ENCODE measurements at regions of chr7 and their contacts with region 1.

Region 1: DNA sequence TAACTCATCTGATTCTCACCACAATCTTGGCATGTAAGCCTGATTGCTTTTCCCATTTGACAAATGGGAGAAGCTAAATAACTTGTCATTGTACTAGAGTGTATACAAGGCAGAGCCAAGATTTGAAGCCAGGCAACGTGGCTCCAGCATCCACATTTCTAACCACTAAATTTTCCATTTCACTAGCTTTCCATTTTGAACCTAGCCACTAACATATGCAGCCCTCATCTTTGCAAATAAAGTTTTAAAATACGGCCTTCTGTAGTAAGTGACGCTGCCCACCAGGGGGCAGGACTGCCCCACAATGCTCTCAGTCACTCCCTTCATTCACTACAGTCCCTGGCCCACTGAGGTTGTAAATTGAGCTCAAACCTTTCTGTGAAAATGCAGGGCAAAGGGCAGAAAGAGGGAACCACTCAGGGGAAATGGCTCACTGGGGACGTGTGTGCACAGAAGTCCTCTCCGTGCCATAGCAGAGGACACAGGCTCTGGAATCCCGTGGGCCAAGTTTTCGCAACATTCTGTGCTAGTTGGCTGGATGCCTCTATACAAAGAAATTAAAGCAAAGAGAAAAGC is 315.7 kb downstream of the TNS3 start:
- DNase-seq: peak; percentile 60
- H3K4me3 ChIP-seq: no peak overlapping the region
- H3K27ac ChIP-seq: no peak overlapping the region
- H3K4me1 ChIP-seq: no peaks in the 10 kb centered on the region
- H3K27me3 ChIP-seq: no peaks in the 10 kb centered on the region
- CTCF ChIP-seq: peak; percentile 86

Region 2: GRCh38 chr7:47428092-47428767 is 162.0 kb after region 1 on chr7:
- CTCF ChIA-PET with region 1: no interaction called
- POLR2A ChIA-PET with region 1: no interaction called
- intact Hi-C with region 1: no loop called
- DNase-seq: no peak
- H3K4me3 ChIP-seq: no peak overlapping the region
- H3K27ac ChIP-seq: no peak overlapping the region
- H3K4me1 ChIP-seq: no peaks in the 10 kb centered on the region
- H3K27me3 ChIP-seq: peaks cover 7% of the 10 kb centered on the region
- CTCF ChIP-seq: no peak

Region 3: DNA sequence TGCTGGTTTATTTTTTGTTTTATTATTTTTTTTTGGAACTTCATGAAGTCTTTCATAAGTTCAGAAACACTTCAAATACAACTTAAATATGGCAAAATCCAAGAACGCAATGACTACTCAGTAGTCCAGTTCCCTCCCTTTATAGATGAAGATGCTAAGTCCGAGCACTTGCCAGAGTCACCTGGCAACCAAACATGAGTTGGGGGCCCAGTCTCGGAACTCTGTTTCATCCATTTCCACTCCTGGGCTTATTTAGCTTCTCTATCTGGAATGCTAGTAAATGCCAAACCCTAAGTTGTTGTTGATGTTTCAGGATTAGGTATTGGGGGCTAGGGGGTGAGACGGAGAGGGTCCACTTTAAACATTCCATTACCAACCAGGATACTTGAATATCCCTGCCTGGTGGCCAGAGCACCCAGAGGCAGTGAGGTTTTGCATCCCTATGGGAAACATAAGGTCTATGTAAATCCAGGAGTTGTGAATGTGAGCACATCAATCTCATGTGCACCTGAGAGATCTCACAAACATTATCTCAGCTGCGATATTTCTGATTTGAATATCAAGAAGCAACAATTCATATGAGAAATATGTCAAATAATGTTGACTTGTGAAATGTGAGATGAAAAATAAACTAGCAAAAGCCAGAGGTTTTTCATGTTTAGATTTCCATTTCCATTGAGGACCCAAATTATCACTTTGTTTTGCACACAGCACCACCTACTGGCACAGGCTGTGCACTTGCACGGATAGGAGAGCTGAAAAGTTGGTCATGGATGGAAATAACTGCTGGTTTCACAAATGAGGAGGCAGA is 552.8 kb after region 1 on chr7:
- CTCF ChIA-PET with region 1: interaction called, 13 read pairs
- POLR2A ChIA-PET with region 1: no interaction called
- intact Hi-C with region 1: loop called (anchors 2 kb)
- DNase-seq: peak; percentile 65
- H3K4me3 ChIP-seq: no peak overlapping the region
- H3K27ac ChIP-seq: no peak overlapping the region
- H3K4me1 ChIP-seq: no peaks in the 10 kb centered on the region
- H3K27me3 ChIP-seq: peaks cover 15% of the 10 kb centered on the region
- CTCF ChIP-seq: peak; percentile 95

Region 4: DNA sequence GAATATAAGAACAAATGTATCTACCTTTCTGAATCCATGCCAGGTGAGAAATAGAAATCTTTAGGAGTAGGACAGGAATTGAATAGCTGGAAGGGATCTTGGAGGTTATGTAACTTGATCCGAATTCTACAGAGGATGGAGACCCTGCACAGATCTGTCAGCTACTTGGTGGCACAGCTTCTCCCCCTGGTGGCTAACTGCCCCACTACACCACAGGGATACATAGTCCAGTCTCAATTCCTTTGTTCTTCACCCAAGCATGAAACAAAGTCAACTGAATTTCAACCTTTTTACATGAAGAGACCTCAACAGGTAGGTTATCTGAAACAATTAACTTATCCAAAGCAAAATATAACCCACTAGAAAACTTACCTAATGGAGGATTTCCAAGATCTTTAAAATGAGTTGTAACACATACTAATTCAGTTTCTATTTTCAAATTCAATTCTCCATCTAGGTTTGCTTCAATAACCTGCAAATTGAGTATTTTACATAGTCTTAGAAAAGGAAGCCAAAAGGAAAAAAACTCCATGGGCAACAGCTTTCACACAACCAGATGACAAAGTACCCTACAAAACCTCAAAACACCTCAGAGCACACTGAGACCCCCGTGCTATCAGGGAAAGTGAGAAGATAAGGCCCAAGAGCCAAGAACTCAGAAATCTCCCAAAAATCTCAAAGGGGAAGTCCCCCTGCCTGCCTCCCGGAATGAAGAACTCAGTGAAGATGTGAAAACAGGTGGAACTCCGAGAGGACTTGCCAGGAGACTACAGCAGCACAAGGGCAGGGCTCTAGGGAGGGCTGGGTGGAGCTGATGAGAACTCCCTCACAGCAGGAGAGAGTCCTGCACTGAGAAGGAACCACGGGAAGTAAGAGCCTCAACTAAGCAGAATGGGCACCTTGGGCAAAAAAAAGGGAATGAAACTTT is 702.9 kb after region 1 on chr7:
- CTCF ChIA-PET with region 1: interaction called, 15 read pairs
- POLR2A ChIA-PET with region 1: no interaction called
- intact Hi-C with region 1: no loop called
- DNase-seq: peak; percentile 75
- H3K4me3 ChIP-seq: no peak overlapping the region
- H3K27ac ChIP-seq: no peak overlapping the region
- H3K4me1 ChIP-seq: peaks cover 8% of the 10 kb centered on the region
- H3K27me3 ChIP-seq: no peaks in the 10 kb centered on the region
- CTCF ChIP-seq: peak; percentile 89